ENCODE measurements at regions of chr17 and their contacts with region 1.

Region 1: DNA sequence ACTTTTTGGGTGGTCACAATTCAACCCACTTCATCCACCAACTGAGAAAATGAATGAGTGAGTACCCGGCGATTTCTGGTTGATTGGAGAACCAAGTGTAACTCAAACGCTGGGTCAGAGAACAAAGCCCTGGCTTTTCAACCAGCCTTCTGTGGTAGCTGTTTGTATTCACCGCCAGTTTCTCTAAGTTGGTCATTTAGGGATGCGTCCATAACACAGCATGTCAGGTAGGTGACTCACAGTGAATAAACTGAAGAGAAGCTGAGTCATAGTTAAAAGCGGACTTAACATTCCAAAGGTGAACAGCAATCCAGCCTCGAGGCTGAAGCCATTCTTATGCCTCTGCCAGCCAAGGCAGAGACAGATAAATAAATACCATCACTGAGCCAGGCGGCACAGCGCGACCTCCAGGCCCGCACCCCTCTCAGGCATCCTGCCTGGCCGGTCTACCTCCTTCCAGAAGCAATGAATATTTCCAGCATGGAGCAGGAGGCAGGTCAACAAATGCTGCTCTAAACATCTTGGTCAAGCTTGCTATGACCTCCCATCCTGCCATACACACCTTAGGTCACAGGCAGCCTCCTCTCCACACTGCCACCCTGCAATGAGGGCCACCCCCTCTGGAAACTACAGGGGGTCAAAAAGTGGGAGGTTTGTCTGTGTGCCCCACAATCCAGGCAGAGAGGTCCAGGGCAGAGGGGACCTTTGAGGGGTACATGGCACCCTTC is 12.4 kb upstream of the CACNG4 start:
- DNase-seq: peak; percentile 7
- H3K4me3 ChIP-seq: no peak overlapping the region
- H3K27ac ChIP-seq: no peak overlapping the region
- H3K4me1 ChIP-seq: peaks cover 4% of the 10 kb centered on the region
- H3K27me3 ChIP-seq: peaks cover 4 to 8% of the 10 kb centered on the region in 2 experiments
- CTCF ChIP-seq: no peak
- POLR2A ChIP-seq: no peak

Region 2: DNA sequence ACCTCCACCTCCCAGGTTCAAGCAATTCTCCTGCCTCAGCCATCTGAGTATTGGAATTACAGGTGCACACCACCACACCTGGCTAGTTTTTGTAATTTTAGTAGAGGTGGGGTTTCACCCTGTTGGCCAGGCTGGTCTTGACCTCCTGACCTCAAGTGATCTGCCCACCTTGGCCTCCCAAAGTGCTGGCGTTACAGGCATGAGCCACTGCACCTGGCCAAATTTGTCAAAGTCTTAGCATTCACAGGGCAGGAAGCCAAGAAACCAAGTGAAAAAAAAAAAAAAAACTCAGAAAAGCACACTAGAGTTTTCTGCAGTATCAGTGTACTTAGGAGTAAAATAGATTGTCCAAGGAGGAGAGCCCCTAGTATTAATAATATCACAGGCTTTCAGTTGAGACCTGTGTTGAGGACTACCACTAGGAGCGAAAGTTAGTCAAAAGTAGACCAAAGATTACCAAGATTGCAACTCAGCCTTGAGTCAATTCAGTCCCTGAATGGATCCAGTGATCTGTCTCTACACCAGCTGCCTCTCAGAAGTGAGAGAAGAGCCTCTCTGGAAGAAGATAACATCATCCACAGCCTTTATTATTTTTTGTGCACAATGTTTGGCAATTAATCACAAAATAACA is 919.9 kb before region 1 on chr17:
- CTCF ChIA-PET with region 1: no interaction called
- POLR2A ChIA-PET with region 1: no interaction called
- dilution Hi-C with region 1: no loop called
- intact Hi-C with region 1: loop called (anchors 5 kb)
- DNase-seq: no peak
- H3K4me3 ChIP-seq: no peak overlapping the region
- H3K27ac ChIP-seq: no peak overlapping the region
- H3K4me1 ChIP-seq: no peaks in the 10 kb centered on the region
- H3K27me3 ChIP-seq: no peaks in the 10 kb centered on the region
- CTCF ChIP-seq: no peak
- POLR2A ChIP-seq: no peak

Measured in endothelial cell of umbilical vein (primary cell).